AG04449 (cell line): ENCODE measurements at regions of chr17 and their contacts with region 1.

Region 1: DNA sequence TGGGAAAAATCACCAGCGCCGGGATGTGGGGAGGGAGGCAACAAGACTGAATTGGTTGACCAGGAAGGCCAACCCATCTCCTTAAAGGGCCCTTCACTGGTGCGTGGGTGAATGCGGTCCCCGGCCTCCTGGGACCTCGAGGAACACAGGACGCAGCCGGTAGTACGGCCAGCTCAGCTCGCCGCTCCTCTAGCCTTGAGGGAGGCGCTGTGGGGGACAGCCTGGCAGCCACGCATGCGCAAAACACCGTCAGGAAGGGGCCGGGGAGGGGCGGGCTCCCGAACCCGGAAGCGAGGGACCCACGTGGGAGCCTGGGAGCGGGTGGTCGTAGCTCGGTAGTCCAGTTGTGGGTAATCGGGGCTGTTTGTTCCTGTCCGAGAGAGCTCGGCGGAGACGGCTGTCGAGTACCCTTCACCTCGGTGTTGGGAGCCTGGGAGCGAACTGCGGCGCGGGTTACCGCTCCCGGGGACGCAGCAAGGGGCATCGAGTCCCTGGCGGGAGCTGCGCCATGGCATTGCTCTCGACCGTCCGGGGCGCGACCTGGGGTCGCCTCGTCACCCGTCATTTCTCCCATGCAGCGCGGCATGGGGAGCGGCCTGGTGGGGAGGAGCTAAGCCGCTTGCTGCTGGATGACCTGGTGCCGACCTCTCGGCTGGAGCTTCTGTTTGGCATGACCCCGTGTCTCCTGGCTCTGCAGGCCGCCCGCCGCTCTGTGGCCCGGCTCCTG is at the start of gene MRM1:
- DNase-seq: peak; percentile 46
- H3K4me3 ChIP-seq: peak within 1 kb of the TSS; percentile 97
- CTCF ChIP-seq: peak; percentile 38

Region 2: GRCh38 chr17:36475346-36475970 is 126.0 kb before region 1 on chr17:
- CTCF ChIA-PET with region 1: no interaction called
- POLR2A ChIA-PET with region 1: no interaction called
- DNase-seq: no peak
- H3K4me3 ChIP-seq: no peak overlapping the region
- CTCF ChIP-seq: no peak

Region 3: DNA sequence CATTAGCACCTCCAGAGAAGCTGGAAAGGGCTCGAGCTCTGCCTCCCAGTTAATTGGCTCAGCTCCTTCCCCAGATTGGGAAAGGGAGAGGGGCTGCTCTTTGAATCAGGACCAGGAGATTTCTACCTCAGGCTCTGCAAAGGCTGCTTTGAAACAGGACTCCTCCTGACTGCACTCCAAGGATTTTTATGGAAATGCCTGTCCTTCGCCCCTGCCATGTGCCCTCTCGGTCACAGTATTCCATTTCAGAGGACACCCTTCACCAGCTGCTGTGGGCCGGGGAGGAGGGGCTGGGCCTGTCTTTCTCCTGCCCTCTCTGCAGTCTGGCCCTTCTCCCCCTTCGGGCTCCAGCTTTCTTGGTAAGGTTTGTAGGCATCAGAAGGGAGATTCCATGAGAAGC is 13.5 kb after region 1 on chr17:
- CTCF ChIA-PET with region 1: interaction called, 52 read pairs
- POLR2A ChIA-PET with region 1: no interaction called
- DNase-seq: no peak
- H3K4me3 ChIP-seq: no peak overlapping the region
- CTCF ChIP-seq: no peak

Region 4: GRCh38 chr17:36629252-36629847 is 27.9 kb after region 1 on chr17:
- CTCF ChIA-PET with region 1: interaction called, 27 read pairs
- POLR2A ChIA-PET with region 1: no interaction called
- DNase-seq: no peak
- H3K4me3 ChIP-seq: no peak overlapping the region
- CTCF ChIP-seq: peak; percentile 95

Region 5: DNA sequence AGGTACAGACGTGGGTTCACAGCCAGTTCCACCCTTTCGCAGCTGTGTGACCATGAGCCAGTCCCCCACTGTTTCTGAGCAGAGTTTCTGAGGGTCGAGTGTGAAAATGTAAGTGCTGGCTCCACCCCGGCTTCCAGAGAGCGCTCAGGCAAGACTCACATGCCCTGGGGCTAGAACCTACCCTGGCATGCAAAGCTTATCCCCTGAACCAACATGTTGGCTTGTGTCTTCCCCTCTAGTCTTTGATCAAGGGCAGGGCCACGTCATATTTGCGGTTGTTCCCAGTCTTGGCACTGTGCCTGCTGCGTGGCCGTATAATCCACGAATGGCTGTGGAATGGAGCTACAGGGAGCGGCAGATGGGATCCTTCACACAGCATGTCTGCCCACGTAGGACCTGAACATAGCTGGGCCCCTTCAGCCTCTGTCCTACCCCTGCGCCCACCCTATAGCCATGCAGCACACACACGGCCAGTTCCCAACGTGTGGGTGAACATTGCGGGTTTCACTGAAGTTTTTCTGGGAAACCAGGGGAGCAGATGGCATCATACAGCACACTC is 84.7 kb after region 1 on chr17:
- CTCF ChIA-PET with region 1: no interaction called
- POLR2A ChIA-PET with region 1: no interaction called
- DNase-seq: no peak
- H3K4me3 ChIP-seq: no peak overlapping the region
- CTCF ChIP-seq: no peak

Region 6: DNA sequence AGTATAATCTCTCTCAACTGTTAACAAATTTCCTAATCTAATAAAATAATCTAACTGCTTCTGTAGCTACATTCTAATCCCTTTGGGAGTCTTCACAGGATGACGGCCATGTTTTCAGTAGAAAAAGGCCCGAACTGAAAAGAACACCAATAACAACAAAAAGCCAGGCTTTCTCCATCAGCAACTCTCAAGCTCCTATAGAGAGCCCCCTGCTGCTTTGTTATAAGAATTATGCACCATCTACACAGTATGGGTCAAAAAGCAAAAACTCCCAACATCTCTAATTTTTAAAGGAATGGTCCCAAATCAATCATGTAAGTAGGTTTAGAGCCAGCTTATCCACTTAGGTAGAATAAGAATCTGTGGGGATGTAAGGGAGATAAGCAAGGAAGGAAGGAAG is 610.7 kb after region 1 on chr17:
- CTCF ChIA-PET with region 1: interaction called, 22 read pairs
- POLR2A ChIA-PET with region 1: no interaction called
- DNase-seq: no peak
- H3K4me3 ChIP-seq: no peak overlapping the region
- CTCF ChIP-seq: no peak

Region 7: DNA sequence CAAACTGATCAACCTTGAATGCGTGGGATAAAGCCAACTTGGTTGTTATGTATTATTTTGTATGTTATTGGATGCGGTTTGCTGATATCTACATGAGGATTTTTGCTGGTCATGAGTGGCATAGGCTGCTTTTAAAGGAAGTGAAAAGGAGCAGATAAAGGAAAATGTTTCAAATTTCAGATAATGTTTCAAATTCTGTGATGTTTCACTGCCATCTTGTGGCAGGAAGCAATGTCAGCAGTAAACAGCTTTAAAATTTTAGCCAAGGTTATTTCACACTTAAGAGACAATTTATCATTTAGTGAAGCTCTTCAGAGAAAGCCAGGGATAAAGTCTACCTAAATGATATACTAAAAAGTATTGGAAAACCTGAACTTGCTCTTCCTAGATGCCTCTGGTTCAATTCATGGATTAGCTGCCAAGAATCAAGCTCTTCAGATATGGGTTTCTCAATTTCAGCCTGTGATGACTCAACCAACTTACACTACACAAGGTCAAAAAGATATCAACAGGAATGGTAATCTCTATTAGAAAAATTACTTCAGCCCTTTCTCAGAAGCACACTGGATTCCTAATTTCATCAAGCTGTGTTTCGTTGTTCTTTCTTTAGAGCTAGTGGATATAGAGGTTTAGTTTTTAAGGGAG is 638.3 kb after region 1 on chr17:
- CTCF ChIA-PET with region 1: interaction called, 82 read pairs
- POLR2A ChIA-PET with region 1: no interaction called
- DNase-seq: no peak
- H3K4me3 ChIP-seq: no peak overlapping the region
- CTCF ChIP-seq: peak; percentile 58